Stomach (tissue), 19 donors: ENCODE measurements at regions of chr6 and their contacts with region 1.

Region 1: GRCh38 chr6:31366693-31367470 is 9.9 kb upstream of the HLA-B start:
- DNase-seq: peak; percentile 86 to 96
- H3K4me3 ChIP-seq: peak overlapping the region; percentile 24 to 36 (median 32)
- H3K27ac ChIP-seq: no peak overlapping the region
- H3K4me1 ChIP-seq: peaks cover 0 to 9% (median 9%) of the 10 kb centered on the region in 4 donors
- H3K27me3 ChIP-seq: peaks cover 0 to 36% (median 0%) of the 10 kb centered on the region in 3 donors
- CTCF ChIP-seq: peak in 6 of 7 experiments; percentile 78 to 98 (median 93)
- EP300 ChIP-seq: no peak
- POLR2A ChIP-seq: no peak

Region 2: GRCh38 chr6:31139599-31139998 is 227.3 kb before region 1 on chr6:
- intact Hi-C with region 1: loop called (anchors 5 kb)
- DNase-seq: no peak
- H3K4me3 ChIP-seq: no peak overlapping the region
- H3K27ac ChIP-seq: no peak overlapping the region
- H3K4me1 ChIP-seq: peaks cover 10 to 32% (median 23%) of the 10 kb centered on the region in 4 donors
- H3K27me3 ChIP-seq: no peaks in the 10 kb centered on the region
- CTCF ChIP-seq: no peak
- EP300 ChIP-seq: no peak
- POLR2A ChIP-seq: no peak